ENCODE measurements at regions of chr2 and their contacts with region 1.

Region 1: GRCh38 chr2:705971-706511 is 28.8 kb upstream of the TMEM18 start:
- DNase-seq: peak; percentile 61
- ATAC-seq: peak; percentile 89
- H3K4me3 Mint-ChIP-seq: no peak overlapping the region
- H3K27ac Mint-ChIP-seq: peak overlapping the region; percentile 6
- H3K4me1 Mint-ChIP-seq: peaks cover 11% of the 10 kb centered on the region
- H3K27me3 Mint-ChIP-seq: peaks cover 6% of the 10 kb centered on the region

Region 2: GRCh38 chr2:636641-637405 is 69.2 kb before region 1 on chr2:
- CTCF ChIA-PET with region 1: no interaction called
- POLR2A ChIA-PET with region 1: no interaction called
- intact Hi-C with region 1: no loop called
- DNase-seq: peak; percentile 72
- ATAC-seq: peak; percentile 76
- H3K4me3 Mint-ChIP-seq: peak overlapping the region; percentile 51
- H3K27ac Mint-ChIP-seq: no peak overlapping the region
- H3K4me1 Mint-ChIP-seq: peaks cover 6% of the 10 kb centered on the region
- H3K27me3 Mint-ChIP-seq: no peaks in the 10 kb centered on the region

Region 3: GRCh38 chr2:735670-736582 is 29.9 kb after region 1 on chr2:
- CTCF ChIA-PET with region 1: no interaction called
- POLR2A ChIA-PET with region 1: no interaction called
- intact Hi-C with region 1: no loop called
- DNase-seq: peak; percentile 10
- ATAC-seq: peak; percentile 30
- H3K4me3 Mint-ChIP-seq: no peak overlapping the region
- H3K27ac Mint-ChIP-seq: no peak overlapping the region
- H3K4me1 Mint-ChIP-seq: peaks cover 4% of the 10 kb centered on the region
- H3K27me3 Mint-ChIP-seq: peaks cover 11% of the 10 kb centered on the region

Region 4: DNA sequence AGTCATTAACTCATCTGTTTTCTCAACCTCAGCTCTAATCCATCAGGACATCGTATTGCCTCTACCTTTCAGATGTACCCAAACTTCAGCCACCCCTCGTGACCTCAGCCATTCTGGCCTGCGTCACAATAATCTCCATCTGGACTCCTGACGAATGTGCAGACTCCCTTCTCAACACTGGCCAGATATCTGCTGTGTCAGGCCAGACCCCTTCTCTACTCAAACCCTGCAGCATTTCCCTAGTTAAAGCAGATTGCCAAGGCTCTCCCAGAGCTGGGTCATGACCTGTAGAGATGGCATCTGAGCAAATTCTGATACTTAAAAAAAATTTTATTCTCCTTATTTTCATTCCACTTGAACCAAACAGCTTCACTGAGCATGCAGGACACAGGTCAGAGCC is 40.7 kb after region 1 on chr2:
- CTCF ChIA-PET with region 1: no interaction called
- POLR2A ChIA-PET with region 1: no interaction called
- intact Hi-C with region 1: no loop called
- DNase-seq: no peak
- ATAC-seq: no peak
- H3K4me3 Mint-ChIP-seq: no peak overlapping the region
- H3K27ac Mint-ChIP-seq: no peak overlapping the region
- H3K4me1 Mint-ChIP-seq: no peaks in the 10 kb centered on the region
- H3K27me3 Mint-ChIP-seq: peaks cover 26% of the 10 kb centered on the region

Region 5: DNA sequence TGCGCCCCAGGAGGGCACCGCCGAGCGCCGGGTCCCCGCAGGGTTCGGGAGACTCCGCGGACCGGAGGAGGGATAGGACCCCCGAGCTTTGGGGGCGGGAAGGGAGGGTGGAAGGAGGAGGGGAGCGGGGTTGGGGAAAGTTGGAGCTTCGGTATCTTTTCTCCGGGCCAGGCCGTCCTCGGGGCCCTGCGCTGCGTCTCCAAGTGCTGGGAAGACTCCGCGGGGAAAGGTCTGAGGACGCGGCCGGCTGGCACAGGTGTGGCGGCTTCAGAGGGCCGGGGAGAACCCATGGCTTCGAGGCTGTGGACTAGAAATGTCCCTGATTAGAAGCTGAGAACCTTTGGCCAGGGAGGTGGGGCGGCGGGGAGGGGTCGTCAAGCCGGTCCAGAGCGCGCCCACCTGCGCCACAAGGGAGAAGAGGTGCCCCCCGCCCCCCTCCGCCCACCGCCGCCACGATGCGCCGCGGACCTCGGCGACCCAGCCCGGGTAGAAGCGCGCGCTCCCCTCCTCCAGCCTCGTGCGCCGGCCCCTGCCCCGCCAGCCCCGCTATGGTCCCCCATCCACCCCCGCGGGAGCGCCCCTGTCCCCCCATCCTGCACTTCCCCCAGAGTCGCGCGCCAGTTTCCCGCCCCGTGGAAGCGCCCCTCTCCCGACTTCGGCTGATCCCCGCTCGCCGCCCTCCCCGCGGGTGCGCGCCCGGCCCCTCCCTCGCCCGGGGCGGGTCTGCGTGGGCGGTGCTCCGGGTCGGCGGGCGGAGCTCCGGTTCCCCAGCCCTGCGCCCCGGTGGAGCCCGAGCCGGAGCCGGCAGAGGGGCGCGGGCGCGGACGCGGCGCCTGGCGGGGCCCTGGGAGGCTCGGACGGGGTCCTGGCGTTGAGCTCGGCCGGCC is 244.3 kb after region 1 on chr2 and contains the start of gene SNTG2:
- CTCF ChIA-PET with region 1: no interaction called
- POLR2A ChIA-PET with region 1: no interaction called
- intact Hi-C with region 1: loop called in 1 of 2 experiments (anchors 10 kb)
- DNase-seq: peak; percentile 71
- ATAC-seq: peak; percentile 50
- H3K4me3 Mint-ChIP-seq: peak within 1 kb of the TSS; percentile 66
- H3K27ac Mint-ChIP-seq: no peak within 1 kb of the TSS
- H3K4me1 Mint-ChIP-seq: peaks cover 23% of the 10 kb centered on the region
- H3K27me3 Mint-ChIP-seq: peaks cover 40% of the 10 kb centered on the region
- total RNA-seq, gene SNTG2: 0.25 to 0.57 TPM

Measured in activated CD4-positive, alpha-beta T cell treated with anti-CD3 and anti-CD28 coated beads for 36 hours (primary cell).